ENCODE measurements at regions of chrX and their contacts with region 1.

Region 1: DNA sequence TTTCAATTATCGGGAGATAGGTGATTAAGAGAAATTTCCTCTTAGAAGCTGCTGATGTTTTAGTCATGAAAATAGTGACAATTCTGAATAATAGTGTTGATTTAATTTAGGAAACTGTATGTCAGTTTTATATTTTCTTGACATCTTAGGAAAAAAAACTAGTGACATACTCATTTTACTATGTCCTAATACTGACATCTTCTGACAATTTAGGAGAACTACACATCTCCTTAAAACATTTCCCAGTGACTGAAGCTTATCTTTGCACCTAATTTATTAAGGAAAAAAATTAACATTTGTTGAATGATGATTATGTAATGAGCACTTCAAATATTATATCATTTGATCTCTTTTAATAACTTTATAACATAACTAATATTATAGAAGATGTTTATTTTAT is 42.0 kb upstream of the RBMXL3 start:
- DNase-seq: no peak
- H3K4me3 Mint-ChIP-seq: no peak overlapping the region
- H3K27ac Mint-ChIP-seq: no peak overlapping the region
- H3K4me1 Mint-ChIP-seq: no peaks in the 10 kb centered on the region
- H3K27me3 Mint-ChIP-seq: no peaks in the 10 kb centered on the region
- CTCF ChIP-seq: peak; percentile 34

Region 2: DNA sequence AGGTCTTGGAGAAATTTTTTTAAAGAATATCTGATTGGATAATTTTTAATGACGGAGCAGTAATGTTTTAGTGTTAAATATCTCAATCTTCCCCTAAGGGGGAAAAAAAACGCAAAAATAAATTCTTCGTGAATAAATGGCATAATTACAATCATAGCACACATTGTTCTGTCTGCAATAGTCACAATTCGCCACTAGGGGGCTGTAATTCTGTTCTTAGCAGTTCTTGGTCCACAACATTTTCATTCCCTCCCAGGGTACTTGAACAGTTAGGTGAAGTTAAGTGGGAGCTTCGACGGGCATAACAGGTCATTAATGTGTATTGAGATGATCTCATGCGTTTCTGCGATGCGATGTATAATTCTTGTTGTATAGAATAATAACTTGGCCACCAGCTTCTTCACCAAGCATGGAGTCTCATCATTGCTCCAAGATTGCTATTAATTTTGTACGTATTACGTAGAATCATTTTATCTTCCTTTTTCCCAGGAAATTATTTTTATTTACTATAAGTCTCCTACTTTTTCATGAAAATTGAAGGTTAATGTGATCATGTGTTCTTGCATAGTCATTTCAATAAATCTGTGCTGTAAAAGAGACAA is 536.1 kb before region 1 on chrX:
- CTCF ChIA-PET with region 1: no interaction called
- intact Hi-C with region 1: loop called (anchors 5 kb)
- DNase-seq: peak; percentile 31
- H3K4me3 Mint-ChIP-seq: no peak overlapping the region
- H3K27ac Mint-ChIP-seq: no peak overlapping the region
- H3K4me1 Mint-ChIP-seq: no peaks in the 10 kb centered on the region
- H3K27me3 Mint-ChIP-seq: peaks cover 5% of the 10 kb centered on the region
- CTCF ChIP-seq: peak; percentile 15

Region 3: GRCh38 chrX:114626323-114626722 is 520.9 kb before region 1 on chrX:
- CTCF ChIA-PET with region 1: interaction called, 6 read pairs
- intact Hi-C with region 1: loop called (anchors 2 kb)
- DNase-seq: peak; percentile 10
- H3K4me3 Mint-ChIP-seq: no peak overlapping the region
- H3K27ac Mint-ChIP-seq: no peak overlapping the region
- H3K4me1 Mint-ChIP-seq: no peaks in the 10 kb centered on the region
- H3K27me3 Mint-ChIP-seq: no peaks in the 10 kb centered on the region
- CTCF ChIP-seq: peak; percentile 45

Region 4: GRCh38 chrX:114976292-114976691 is 170.9 kb before region 1 on chrX:
- CTCF ChIA-PET with region 1: no interaction called
- intact Hi-C with region 1: loop called (anchors 2 kb)
- DNase-seq: peak; percentile 9
- H3K4me3 Mint-ChIP-seq: no peak overlapping the region
- H3K27ac Mint-ChIP-seq: peak overlapping the region; percentile 84
- H3K4me1 Mint-ChIP-seq: peaks cover 28% of the 10 kb centered on the region
- H3K27me3 Mint-ChIP-seq: no peaks in the 10 kb centered on the region
- CTCF ChIP-seq: no peak

Region 5: DNA sequence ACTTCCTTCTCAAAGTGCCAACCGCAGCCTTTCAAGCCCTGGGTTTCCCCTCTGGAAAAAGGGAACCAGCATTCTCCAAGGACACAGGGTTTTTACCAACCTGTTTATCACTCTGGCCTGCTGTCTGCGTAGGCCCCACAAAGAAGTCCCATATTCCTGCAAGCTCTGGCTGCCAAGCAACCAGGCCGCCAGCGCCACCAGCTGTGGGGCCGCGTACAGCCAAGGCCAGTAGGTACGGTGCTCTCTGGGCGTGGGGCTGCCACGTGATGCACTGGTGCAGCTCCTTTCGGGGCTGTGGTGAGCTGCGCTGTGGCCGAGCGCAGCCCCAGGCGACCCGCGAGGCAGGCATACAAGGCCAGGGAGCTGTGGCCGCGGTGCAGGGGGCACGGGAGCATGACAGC is 164.4 kb after region 1 on chrX:
- CTCF ChIA-PET with region 1: no interaction called
- intact Hi-C with region 1: no loop called
- DNase-seq: no peak
- H3K4me3 Mint-ChIP-seq: no peak overlapping the region
- H3K27ac Mint-ChIP-seq: no peak overlapping the region
- H3K4me1 Mint-ChIP-seq: no peaks in the 10 kb centered on the region
- H3K27me3 Mint-ChIP-seq: no peaks in the 10 kb centered on the region
- CTCF ChIP-seq: no peak

Measured in Calu3 (cell line).